Mammary epithelial cell (primary cell): ENCODE measurements at regions of chr1 and their contacts with region 1.

Region 1: GRCh38 chr1:167687919-167688519 is 33.8 kb upstream of the MPZL1 start:
- DNase-seq: peak; percentile 65
- H3K4me3 ChIP-seq: no peak overlapping the region
- H3K27ac ChIP-seq: no peak overlapping the region
- H3K4me1 ChIP-seq: peaks cover 27% of the 10 kb centered on the region
- H3K27me3 ChIP-seq: no peaks in the 10 kb centered on the region
- CTCF ChIP-seq: peak; percentile 87 to 90

Region 2: DNA sequence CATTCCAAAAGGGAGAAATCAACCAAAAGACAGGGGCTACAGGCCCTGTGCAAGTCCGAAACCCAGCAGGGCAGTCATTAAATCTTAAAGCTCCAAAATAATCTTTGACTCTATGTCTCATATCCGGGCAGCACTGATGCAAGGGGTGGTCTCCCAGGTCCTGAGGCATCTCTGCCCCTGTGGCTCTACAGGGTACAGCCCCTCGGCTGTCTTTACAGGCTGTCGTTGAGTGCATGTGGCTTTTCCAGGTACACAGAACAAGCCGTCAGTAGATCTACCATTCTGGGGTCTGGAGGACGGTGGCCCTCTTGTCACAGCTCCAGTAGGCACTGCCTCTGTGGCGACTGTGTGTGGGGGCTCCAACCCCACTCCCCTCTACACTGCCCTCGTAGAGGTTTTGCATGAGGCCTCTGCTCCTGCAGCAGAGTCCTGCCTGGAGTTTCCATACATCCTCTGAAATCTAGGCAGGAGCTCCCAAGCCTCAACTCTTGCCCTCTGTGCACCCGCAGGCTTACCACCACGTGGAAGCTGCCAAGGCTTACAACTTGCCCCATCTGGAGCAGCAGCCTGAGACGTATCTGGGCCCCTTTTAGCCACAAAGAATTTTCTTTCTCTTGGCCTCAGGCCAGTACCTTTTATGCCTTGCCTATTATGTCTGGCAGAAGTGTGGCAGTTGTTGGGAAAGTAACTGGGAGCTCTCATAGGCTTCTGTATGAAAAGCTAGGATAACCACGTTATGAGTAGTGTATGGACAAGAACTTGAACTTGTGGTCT is 414.8 kb before region 1 on chr1:
- CTCF ChIA-PET with region 1: no interaction called
- dilution Hi-C with region 1: no loop called
- in situ Hi-C with region 1: loop called in 1 of 2 experiments (anchors 25 kb)
- intact Hi-C with region 1: no loop called
- DNase-seq: peak; percentile 49
- H3K4me3 ChIP-seq: no peak overlapping the region
- H3K27ac ChIP-seq: no peak overlapping the region
- H3K4me1 ChIP-seq: no peaks in the 10 kb centered on the region
- H3K27me3 ChIP-seq: no peaks in the 10 kb centered on the region
- CTCF ChIP-seq: no peak

Region 3: DNA sequence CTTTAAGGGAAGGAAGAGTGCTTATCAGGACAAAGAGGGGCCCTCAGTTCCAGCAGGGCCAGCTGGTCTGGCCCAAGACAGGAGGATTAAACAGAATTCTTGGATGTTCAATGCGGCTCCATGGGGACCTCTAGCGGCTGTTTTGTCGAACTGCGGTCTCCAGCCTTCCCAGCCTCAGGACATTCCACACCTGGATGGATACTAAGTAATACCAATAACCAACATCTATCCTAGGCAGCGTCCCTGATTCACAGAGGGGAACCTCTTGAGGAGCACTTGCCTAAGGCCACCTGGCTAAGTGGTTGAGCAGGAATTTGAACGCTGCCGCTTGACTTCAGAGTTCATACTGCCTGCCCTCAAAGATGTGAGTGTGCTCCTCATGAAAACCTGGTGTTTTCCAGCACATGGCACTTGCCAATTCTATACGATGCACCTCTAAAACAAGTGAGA is 154.1 kb before region 1 on chr1:
- CTCF ChIA-PET with region 1: no interaction called
- dilution Hi-C with region 1: no loop called
- in situ Hi-C with region 1: no loop called
- intact Hi-C with region 1: loop called (anchors 1 kb)
- DNase-seq: peak; percentile 68
- H3K4me3 ChIP-seq: no peak overlapping the region
- H3K27ac ChIP-seq: no peak overlapping the region
- H3K4me1 ChIP-seq: peaks cover 21% of the 10 kb centered on the region
- H3K27me3 ChIP-seq: no peaks in the 10 kb centered on the region
- CTCF ChIP-seq: peak; percentile 87 to 90

Region 4: GRCh38 chr1:167599957-167600581 is 88.0 kb before region 1 on chr1:
- CTCF ChIA-PET with region 1: interaction called, 9 read pairs
- dilution Hi-C with region 1: loop called (anchors 5 kb)
- in situ Hi-C with region 1: loop called (anchors 5 kb)
- intact Hi-C with region 1: loop called (anchors 1 kb)
- DNase-seq: peak; percentile 63
- H3K4me3 ChIP-seq: no peak overlapping the region
- H3K27ac ChIP-seq: no peak overlapping the region
- H3K4me1 ChIP-seq: peaks cover 18% of the 10 kb centered on the region
- H3K27me3 ChIP-seq: no peaks in the 10 kb centered on the region
- CTCF ChIP-seq: peak; percentile 59 to 64

Region 5: GRCh38 chr1:167617153-167618147 is 70.6 kb before region 1 on chr1:
- CTCF ChIA-PET with region 1: no interaction called
- dilution Hi-C with region 1: no loop called
- in situ Hi-C with region 1: no loop called
- intact Hi-C with region 1: loop called (anchors 5 kb)
- DNase-seq: peak; percentile 80
- H3K4me3 ChIP-seq: no peak overlapping the region
- H3K27ac ChIP-seq: peak overlapping the region; percentile 77
- H3K4me1 ChIP-seq: peaks cover 20% of the 10 kb centered on the region
- H3K27me3 ChIP-seq: no peaks in the 10 kb centered on the region
- CTCF ChIP-seq: no peak

Region 6: GRCh38 chr1:167669209-167670124 is 18.6 kb before region 1 on chr1:
- CTCF ChIA-PET with region 1: no interaction called
- dilution Hi-C with region 1: no loop called
- in situ Hi-C with region 1: no loop called
- intact Hi-C with region 1: loop called (anchors 1 kb)
- DNase-seq: no peak
- H3K4me3 ChIP-seq: no peak overlapping the region
- H3K27ac ChIP-seq: no peak overlapping the region
- H3K4me1 ChIP-seq: peaks cover 61% of the 10 kb centered on the region
- H3K27me3 ChIP-seq: no peaks in the 10 kb centered on the region
- CTCF ChIP-seq: no peak